Activated CD4-positive, alpha-beta memory T cell treated with anti-CD3 and anti-CD28 coated beads for 36 hours (primary cell): ENCODE measurements at regions of chr2 and their contacts with region 1.

Region 1: DNA sequence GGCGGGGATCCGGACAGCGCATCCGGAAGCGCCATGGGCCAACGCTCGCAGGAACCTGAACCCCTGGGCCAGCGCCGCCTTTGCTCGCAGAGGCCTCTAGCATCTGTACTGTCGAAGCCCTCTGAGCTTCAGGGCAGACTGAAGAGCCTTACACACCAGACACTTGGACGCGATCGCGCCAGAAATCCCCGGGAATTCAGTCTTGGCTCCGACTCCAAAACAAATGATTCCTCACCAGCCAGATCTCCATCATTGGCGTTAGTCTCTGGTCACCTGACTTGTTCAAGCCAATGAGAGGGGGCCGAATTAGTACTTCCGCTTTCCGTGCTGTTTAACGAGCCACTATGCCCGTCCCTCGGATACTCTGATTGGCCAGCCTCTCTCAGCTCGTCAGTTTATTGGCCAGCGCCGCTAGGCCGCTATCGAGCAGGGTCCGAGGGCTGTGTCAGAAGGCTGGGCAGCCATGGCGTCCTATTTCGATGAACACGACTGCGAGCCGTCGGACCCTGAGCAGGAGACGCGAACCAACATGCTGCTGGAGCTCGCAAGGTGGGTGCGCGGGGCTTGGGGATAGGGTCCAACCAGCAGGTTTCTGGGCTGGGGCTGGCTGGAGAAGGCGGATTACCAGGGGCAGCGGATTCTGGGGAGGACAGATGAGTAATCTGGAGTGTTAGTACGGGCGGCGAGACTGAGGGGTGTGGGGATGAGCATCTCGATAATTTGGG is at the start of gene RNF181:
- DNase-seq: peak; percentile 96
- H3K4me3 Mint-ChIP-seq: peak within 1 kb of the TSS; percentile 97
- H3K27ac Mint-ChIP-seq: peak within 1 kb of the TSS; percentile 95
- H3K4me1 Mint-ChIP-seq: peaks cover 23% of the 10 kb centered on the region
- H3K27me3 Mint-ChIP-seq: no peaks in the 10 kb centered on the region
- total RNA-seq, gene RNF181: 120 to 124 TPM

Region 2: DNA sequence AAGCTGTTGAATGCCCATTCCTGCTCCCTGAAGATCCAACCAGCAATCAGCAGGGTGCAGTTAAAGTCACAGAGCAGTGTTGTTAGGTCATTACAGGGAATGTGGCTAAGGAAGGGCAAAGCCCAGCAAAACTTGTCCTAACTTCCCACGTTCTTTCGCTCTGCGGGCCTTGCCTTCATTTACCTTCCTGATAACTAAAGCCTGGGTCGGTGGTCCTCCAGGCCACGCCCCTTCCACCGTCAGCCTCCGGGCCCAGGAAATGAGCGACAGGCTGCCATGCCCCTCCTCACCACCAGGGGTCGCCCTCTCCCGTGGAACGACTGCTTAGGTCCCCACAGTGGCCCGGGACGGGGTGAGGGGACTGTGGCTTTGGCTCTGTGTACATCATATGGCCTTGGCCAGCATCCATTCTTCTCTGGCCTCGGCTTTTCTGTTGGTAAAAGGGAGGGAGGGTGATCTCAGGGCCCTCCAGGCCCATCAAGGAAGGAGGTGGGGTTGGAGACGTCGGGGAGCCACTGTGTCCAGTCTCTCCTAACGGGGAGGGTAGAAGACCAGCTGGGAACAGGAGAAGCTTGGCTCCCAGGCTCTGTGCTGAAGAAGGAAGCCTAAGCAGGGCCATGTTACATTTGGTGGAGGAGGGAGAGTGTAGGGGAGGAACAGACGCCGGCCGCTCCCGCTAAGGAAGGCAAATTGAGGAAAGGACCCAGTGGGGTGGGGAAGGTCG is 174.8 kb before region 1 on chr2:
- CTCF ChIA-PET with region 1: interaction called, 3 read pairs
- POLR2A ChIA-PET with region 1: no interaction called
- intact Hi-C with region 1: loop called (anchors 1 kb)
- DNase-seq: peak; percentile 95
- H3K4me3 Mint-ChIP-seq: peak overlapping the region; percentile 53
- H3K27ac Mint-ChIP-seq: peak overlapping the region; percentile 64
- H3K4me1 Mint-ChIP-seq: peaks cover 18% of the 10 kb centered on the region
- H3K27me3 Mint-ChIP-seq: no peaks in the 10 kb centered on the region

Region 3: DNA sequence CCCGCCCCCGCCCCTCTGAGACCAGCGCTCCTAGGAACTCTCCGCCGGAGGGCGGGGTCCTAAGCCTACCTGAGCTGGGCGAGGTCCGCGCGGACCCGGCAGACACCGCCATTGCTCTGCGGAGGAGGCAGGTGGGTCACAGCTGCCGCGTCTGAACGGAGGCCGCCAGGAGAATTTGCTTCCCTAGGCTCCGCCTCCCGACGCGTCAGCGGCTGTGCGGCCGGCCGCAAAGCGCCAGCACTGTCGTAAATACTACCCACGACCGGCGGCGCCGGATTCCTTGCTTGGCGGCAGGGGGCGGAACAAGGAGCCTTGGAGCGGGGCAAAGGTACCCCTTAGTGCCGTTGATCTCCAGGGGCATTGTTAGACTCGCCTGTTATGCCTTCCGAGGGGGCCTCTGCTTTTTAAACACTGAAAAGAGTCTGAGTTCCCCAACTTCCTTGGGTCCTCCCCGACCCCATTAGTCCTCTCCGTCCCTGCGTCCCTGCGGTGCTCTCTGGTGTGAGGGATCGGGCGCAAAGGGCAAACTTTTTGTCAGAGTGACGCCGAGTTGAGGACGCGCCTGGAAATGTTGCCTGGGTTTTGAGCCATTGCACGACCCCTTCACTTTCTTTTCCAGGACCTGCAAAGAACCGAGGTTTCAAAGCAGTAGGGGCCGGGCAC is 34.0 kb before region 1 on chr2 and contains the start of gene GGCX:
- CTCF ChIA-PET with region 1: no interaction called
- POLR2A ChIA-PET with region 1: interaction called, 3 read pairs
- intact Hi-C with region 1: loop called (anchors 1 kb)
- DNase-seq: peak; percentile 98
- H3K4me3 Mint-ChIP-seq: peak within 1 kb of the TSS; percentile 92
- H3K27ac Mint-ChIP-seq: peak within 1 kb of the TSS; percentile 83
- H3K4me1 Mint-ChIP-seq: peaks cover 37% of the 10 kb centered on the region
- H3K27me3 Mint-ChIP-seq: no peaks in the 10 kb centered on the region
- total RNA-seq, gene GGCX: 24.2 to 25.2 TPM

Region 4: DNA sequence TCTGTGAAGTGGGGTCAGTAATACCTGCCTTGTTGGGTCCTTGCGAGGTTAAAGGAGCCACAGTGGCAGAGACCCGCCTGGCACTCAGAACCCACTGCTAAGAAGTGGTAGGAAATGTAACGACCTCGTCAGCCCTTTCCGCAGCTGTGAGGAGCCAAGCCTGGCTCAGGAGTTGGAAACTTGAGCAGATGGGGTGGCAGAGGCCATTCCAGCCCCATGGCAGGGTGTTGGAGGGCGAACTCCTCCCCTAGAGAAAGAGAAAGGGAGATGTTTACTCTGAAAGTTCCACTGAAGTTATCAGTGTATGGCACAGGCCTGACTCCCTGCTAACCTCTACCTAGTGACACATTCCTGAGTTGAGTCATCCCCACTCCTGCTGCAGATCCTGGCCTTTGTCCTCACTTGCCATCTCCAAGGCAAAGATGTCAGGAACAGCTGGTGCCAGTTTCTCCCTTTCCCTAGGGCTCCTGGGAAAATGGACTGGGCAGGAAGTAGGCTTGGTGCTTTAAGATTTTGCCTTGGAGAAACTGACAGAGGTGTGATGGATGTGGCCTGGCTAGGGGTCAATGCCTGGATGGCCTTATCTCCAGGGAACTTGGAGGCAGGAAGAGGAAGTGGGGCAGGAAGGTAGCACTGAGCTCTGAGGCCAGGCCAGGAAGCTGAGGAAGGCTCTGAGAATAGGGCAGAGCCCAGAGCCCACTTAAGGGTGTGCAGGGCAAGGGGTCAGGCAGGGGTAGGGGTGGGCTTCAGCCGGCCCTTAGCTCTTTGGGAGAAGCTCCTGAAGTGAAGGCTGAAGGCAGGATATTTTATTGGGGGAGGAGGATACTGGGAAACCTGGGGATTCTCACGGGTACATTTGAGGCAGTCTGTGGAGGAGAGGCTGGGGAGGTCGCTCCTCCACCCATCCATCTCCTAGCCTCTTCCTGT is 10.3 kb before region 1 on chr2:
- CTCF ChIA-PET with region 1: interaction called, 10 read pairs
- POLR2A ChIA-PET with region 1: interaction called, 19 read pairs
- intact Hi-C with region 1: loop called (anchors 1 kb)
- DNase-seq: peak; percentile 54
- H3K4me3 Mint-ChIP-seq: peak overlapping the region; percentile 82
- H3K27ac Mint-ChIP-seq: peak overlapping the region; percentile 91
- H3K4me1 Mint-ChIP-seq: peaks cover 36% of the 10 kb centered on the region
- H3K27me3 Mint-ChIP-seq: no peaks in the 10 kb centered on the region

Region 5: DNA sequence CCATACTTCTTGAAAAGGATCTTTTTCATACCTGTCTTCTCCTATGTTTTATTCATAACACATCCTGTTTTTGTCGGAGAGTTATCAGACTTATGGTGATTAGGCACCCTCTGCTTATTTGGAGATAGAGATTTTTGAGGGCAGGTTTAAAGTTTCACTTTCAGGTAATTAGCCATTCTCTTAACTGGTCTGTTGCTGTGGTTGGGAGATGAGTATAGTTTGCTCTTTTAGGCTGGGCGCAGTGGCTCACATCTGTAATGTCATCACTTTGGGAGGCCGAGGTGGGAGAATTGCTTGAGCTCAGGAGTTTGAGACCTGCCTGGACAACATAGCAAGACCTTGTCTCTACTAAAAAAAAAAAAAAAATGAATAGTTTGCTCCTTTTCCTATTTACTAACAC is 47.3 kb after region 1 on chr2:
- CTCF ChIA-PET with region 1: interaction called, 16 read pairs
- POLR2A ChIA-PET with region 1: no interaction called
- intact Hi-C with region 1: no loop called
- DNase-seq: peak; percentile 36
- H3K4me3 Mint-ChIP-seq: no peak overlapping the region
- H3K27ac Mint-ChIP-seq: peak overlapping the region; percentile 69
- H3K4me1 Mint-ChIP-seq: peaks cover 13% of the 10 kb centered on the region
- H3K27me3 Mint-ChIP-seq: no peaks in the 10 kb centered on the region

Region 6: DNA sequence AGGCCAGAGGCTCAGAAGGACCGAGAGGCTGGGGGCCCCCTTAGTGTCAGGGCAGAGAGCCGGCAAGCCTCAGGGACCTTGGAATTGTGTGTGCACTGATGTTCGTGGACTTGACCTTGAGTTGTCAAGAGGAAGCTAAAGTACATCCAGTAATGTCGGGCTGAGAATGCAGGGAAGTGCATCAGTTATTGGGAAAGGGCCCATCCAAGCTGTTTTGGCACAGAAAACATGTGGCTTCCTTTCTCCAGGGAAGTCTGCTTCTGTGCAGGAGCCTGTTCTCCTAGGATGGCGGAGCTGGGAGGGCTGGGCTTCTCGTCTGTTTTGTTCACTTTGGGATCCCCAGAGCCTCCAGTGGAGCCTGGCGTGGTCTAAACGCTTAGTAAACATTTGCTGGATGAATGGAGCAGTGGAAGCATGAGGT is 182.0 kb after region 1 on chr2:
- CTCF ChIA-PET with region 1: no interaction called
- POLR2A ChIA-PET with region 1: no interaction called
- intact Hi-C with region 1: no loop called
- DNase-seq: no peak
- H3K4me3 Mint-ChIP-seq: no peak overlapping the region
- H3K27ac Mint-ChIP-seq: no peak overlapping the region
- H3K4me1 Mint-ChIP-seq: no peaks in the 10 kb centered on the region
- H3K27me3 Mint-ChIP-seq: peaks cover 13% of the 10 kb centered on the region